T-cell (primary cell): ENCODE measurements at regions of chr1 and their contacts with region 1.

Region 1: GRCh38 chr1:84377480-84378095 is 20.7 kb upstream of the DNASE2B start:
- DNase-seq: no peak
- ATAC-seq: no peak
- H3K4me3 ChIP-seq: no peak overlapping the region
- H3K4me3 Mint-ChIP-seq: no peak overlapping the region
- H3K27ac ChIP-seq: no peak overlapping the region
- H3K27ac Mint-ChIP-seq: no peak overlapping the region
- H3K4me1 ChIP-seq: no peaks in the 10 kb centered on the region
- H3K4me1 Mint-ChIP-seq: no peaks in the 10 kb centered on the region
- H3K27me3 ChIP-seq: no peaks in the 10 kb centered on the region
- H3K27me3 Mint-ChIP-seq: peaks cover 0 to 2% of the 10 kb centered on the region in 2 donors

Region 2: DNA sequence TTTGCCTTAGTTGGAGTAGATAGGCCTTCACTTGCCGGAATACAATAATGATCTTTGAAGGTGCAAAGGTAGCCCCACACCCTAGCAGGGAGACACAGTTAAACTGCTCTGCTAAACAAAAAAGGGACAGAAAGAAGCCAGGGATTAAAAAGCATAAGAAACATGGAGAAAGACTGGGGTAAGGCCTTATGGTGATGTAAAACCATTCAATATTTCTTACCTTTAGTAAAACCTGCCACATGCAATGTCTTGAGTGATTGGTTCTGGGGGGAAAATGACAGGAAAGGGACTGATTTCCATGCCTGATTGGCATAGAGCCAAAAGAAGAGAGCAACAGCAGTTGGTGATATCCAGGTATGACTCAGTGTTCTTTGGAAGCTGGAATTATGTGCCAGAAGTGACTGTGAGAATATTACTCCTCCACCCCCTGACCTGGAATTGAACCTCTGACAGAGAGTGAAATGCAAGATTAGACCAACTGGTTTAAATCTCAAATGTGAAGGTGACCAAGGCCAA is 28.8 kb after region 1 on chr1:
- CTCF ChIA-PET with region 1: no interaction called
- POLR2A ChIA-PET with region 1: no interaction called
- DNase-seq: no peak
- ATAC-seq: no peak
- H3K4me3 ChIP-seq: no peak overlapping the region
- H3K4me3 Mint-ChIP-seq: no peak overlapping the region
- H3K27ac ChIP-seq: no peak overlapping the region
- H3K27ac Mint-ChIP-seq: no peak overlapping the region
- H3K4me1 ChIP-seq: no peaks in the 10 kb centered on the region
- H3K4me1 Mint-ChIP-seq: no peaks in the 10 kb centered on the region
- H3K27me3 ChIP-seq: no peaks in the 10 kb centered on the region
- H3K27me3 Mint-ChIP-seq: peaks cover 0 to 4% of the 10 kb centered on the region in 2 donors

Region 3: DNA sequence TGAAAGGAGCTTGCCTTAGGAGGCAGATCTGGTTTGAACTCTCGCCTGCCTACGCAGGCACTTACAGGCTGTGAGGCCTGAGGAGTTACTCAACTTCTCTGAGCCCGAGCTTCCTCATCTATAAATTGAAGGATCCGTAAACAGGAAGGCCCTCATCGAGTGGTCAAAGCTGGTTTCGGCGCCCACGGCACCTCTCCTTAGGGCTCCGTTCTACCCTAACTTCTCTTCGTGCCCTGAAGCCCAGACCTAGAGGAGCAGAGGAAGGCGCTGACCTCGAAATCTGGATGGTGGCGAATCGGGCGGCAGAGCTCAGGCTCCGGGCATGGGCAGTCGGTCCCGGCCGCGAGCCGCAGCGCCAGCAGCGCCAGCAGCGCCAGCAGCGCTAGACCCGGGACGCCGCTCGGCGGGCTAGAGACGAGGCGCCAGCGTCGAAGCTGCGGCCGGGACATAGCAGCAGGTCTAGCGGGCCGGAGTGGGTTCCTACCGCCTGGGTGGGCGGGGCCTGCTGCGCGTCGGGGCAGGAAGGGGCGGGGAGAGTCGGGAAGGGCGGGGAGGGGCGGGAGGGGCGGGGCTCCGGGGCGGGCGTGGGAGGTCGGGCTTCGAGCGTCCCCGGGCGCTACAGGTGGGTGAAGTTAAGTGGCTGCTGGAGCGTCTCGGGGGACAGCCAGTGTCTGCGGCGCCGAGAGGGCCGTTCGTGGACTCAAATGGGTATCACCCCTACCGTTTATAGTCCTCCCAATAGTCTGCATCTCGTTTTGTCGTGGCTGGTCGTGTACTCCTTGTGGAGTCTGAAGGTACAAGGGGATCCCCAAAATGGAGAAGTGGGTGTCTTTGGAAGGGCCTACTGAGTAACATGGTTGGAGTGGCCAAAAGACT is 196.6 kb after region 1 on chr1 and contains the start of gene CTBS:
- CTCF ChIA-PET with region 1: no interaction called
- POLR2A ChIA-PET with region 1: no interaction called
- DNase-seq: peak; percentile 62 to 92 (median 77)
- ATAC-seq: peak; percentile 91 to 97 (median 96)
- H3K4me3 ChIP-seq: peak within 1 kb of the TSS; percentile 78 to 82
- H3K4me3 Mint-ChIP-seq: peak within 1 kb of the TSS; percentile 94 to 97 (median 97)
- H3K27ac ChIP-seq: peak within 1 kb of the TSS; percentile 94
- H3K27ac Mint-ChIP-seq: peak within 1 kb of the TSS; percentile 98 to 99
- H3K4me1 ChIP-seq: peaks cover 11 to 14% of the 10 kb centered on the region in 2 experiments
- H3K4me1 Mint-ChIP-seq: peaks cover 41 to 52% (median 44%) of the 10 kb centered on the region in 3 donors
- H3K27me3 ChIP-seq: no peaks in the 10 kb centered on the region
- H3K27me3 Mint-ChIP-seq: no peaks in the 10 kb centered on the region
- total RNA-seq, gene CTBS: 14.8 to 20.3 (median 16.4) TPM

Region 4: DNA sequence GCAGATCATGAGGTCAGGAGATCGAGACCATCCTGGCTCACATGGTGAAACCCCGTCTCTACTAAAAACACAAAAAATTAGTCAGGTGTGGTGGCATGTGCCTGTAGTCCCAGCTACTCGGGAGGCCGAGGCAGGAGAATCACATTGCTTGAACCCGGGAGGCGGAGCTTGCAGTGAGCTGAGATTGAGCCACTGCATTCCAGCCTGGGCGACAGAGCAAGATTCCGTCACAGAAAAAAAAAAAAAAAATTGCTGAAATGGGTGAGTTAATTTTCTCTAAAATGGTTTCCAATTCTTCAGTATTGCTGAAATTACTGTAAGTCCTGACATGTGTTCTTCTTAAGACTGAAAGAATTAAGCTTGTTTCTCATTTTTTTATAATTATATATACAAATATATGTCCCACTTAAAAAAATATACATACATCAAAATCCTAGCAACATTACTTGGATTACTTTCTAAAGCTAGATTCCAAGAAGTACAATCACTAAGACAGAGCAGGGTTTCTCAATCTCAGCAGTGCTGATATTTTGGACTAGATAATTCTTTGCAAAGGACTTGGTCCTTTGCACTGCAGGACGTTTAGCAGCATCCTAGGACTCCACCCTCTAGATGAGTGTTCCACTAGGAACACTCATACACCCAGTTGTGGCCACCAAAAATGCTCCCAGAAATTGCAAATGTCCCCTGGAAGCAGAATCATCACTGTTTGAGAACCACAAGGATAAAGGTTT is 1305.9 kb after region 1 on chr1:
- CTCF ChIA-PET with region 1: no interaction called
- POLR2A ChIA-PET with region 1: interaction called in 1 of 2 experiments, 11 read pairs
- DNase-seq: no peak
- ATAC-seq: no peak
- H3K4me3 ChIP-seq: no peak overlapping the region
- H3K4me3 Mint-ChIP-seq: no peak overlapping the region
- H3K27ac ChIP-seq: no peak overlapping the region
- H3K27ac Mint-ChIP-seq: no peak overlapping the region
- H3K4me1 ChIP-seq: no peaks in the 10 kb centered on the region
- H3K4me1 Mint-ChIP-seq: peaks cover 4 to 10% (median 6%) of the 10 kb centered on the region in 3 donors
- H3K27me3 ChIP-seq: no peaks in the 10 kb centered on the region
- H3K27me3 Mint-ChIP-seq: no peaks in the 10 kb centered on the region